ENCODE measurements at regions of chr9 and their contacts with region 1.

Region 1: GRCh38 chr9:83544002-83544698 is 5.9 kb upstream of the FRMD3 start:
- DNase-seq: no peak
- H3K4me3 ChIP-seq: no peak overlapping the region
- H3K27ac ChIP-seq: no peak overlapping the region
- H3K4me1 ChIP-seq: peaks cover under 1 to 11% (median 2%) of the 10 kb centered on the region in 6 donors
- H3K27me3 ChIP-seq: peaks cover 0 to 8% (median 0%) of the 10 kb centered on the region in 7 donors
- CTCF ChIP-seq: peak in 10 of 11 experiments; percentile 29 to 77 (median 68)
- POLR2A ChIP-seq: no peak

Region 2: DNA sequence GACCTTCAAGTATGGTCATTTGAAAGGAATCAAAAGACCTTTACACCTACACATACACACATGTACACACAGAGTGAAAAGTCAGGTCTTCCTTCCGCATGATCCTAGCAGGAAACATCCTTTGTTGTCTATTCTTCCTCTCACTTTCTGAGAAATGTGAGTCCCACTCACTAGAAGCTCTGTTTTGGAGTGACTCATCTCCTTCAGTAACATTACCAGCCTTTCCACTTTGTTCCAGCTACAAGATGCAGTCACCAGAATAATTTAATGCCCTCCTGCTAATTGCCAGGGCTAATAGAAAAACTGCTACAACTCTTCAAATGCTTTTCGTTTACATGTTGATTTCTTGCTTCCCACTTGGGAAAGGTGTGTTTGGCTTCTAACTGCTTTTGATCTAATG is 898.5 kb before region 1 on chr9:
- intact Hi-C with region 1: no loop called
- DNase-seq: no peak
- H3K4me3 ChIP-seq: no peak overlapping the region
- H3K27ac ChIP-seq: no peak overlapping the region
- H3K4me1 ChIP-seq: no peaks in the 10 kb centered on the region
- H3K27me3 ChIP-seq: no peaks in the 10 kb centered on the region
- CTCF ChIP-seq: no peak
- POLR2A ChIP-seq: no peak

Region 3: GRCh38 chr9:82961504-82962125 is 582.5 kb before region 1 on chr9:
- intact Hi-C with region 1: no loop called
- DNase-seq: peak; percentile 75
- H3K4me3 ChIP-seq: no peak overlapping the region
- H3K27ac ChIP-seq: no peak overlapping the region
- H3K4me1 ChIP-seq: no peaks in the 10 kb centered on the region
- H3K27me3 ChIP-seq: peaks cover 0 to 17% (median 0%) of the 10 kb centered on the region in 7 donors
- CTCF ChIP-seq: peak in 10 of 11 experiments; percentile 60 to 75 (median 68)
- POLR2A ChIP-seq: no peak

Region 4: DNA sequence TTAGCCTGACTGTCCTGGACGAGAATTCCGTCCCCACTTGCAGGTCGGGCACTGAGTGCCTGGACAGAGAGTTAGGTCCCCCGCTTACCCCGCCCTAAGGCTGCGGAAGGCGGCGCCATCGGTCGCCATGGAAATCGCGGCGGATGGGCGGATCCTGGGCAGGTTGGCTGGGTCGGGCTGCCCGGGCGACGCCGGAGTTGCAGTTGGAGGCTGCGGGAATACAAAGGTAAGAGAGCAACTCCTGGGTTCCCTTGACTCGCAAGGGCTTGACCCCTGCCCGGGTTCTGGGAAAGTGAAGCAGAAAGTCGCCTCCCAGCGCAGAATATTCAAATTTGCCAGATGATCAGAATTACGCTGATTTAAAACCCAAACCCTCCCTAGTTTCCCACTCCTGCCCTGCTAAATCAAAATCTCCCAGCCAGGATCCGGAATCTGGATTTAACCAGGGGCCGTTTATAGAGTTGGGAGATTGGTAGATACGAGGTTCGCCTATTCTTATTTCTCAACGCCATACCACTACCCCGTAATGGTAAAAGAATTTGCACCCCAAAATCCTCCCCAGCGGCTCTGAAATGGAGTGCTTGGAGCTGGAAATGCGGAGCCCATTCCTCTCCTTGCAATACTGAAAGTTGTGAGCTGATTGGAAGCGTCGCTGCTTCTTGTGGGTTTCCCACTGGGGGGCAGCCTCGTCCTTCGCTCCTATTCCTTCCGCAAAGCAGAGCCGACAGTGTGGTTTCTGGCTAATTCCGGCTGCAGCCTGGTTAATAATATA is 324.8 kb before region 1 on chr9:
- intact Hi-C with region 1: loop called (anchors 10 kb)
- DNase-seq: peak; percentile 88
- H3K4me3 ChIP-seq: peak overlapping the region; percentile 42 to 71 (median 54)
- H3K27ac ChIP-seq: peak overlapping the region; percentile 42 to 85 (median 73)
- H3K4me1 ChIP-seq: peaks cover 3 to 33% (median 13%) of the 10 kb centered on the region in 6 donors
- H3K27me3 ChIP-seq: peaks cover 0 to 22% (median 0%) of the 10 kb centered on the region in 7 donors
- CTCF ChIP-seq: peak in 3 of 11 experiments; percentile 49 to 76 (median 67)
- POLR2A ChIP-seq: no peak

Region 5: DNA sequence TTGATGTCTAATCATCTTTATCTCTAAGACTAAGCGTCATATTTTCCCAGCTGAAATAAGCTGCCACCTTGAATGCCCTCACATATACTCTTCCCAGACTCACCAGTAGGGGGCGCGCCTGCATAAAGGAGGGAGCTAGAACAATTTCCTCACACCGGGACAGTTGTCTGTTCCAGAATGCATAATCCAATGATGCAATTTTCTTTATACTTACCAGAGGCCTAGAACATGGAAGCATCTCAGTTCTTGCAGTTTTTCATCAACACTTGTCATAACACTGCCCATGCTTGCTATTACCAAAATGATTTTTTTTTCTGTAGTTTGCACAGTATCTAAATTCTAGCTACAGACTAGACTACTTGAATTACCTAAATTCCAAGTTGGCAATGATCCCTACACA is 209.8 kb before region 1 on chr9:
- intact Hi-C with region 1: loop called (anchors 5 kb)
- DNase-seq: peak; percentile 91
- H3K4me3 ChIP-seq: no peak overlapping the region
- H3K27ac ChIP-seq: no peak overlapping the region
- H3K4me1 ChIP-seq: peaks cover 0 to 7% (median 0%) of the 10 kb centered on the region in 6 donors
- H3K27me3 ChIP-seq: no peaks in the 10 kb centered on the region
- CTCF ChIP-seq: peak; percentile 64 to 90 (median 85)
- POLR2A ChIP-seq: no peak

Region 6: DNA sequence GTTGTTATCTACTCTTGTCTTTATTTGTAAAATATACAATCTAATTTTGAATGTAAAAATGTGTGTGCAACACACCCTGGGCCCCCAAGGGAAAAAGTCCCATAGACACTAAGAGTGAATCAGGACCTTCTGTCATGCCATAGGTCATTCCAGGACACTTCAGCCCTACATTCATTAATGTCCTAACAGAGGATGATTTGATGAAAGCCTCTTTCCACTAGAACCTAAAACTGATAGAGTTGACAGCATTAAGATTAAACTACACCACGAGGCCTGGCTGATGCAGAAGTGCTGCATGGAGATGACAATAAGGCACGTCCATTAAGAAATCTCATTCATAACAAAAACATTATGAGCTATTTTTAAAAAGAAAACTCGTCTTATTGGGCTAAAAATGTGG is 52.2 kb before region 1 on chr9:
- intact Hi-C with region 1: no loop called
- DNase-seq: no peak
- H3K4me3 ChIP-seq: no peak overlapping the region
- H3K27ac ChIP-seq: no peak overlapping the region
- H3K4me1 ChIP-seq: peaks cover 0 to 15% (median 0%) of the 10 kb centered on the region in 6 donors
- H3K27me3 ChIP-seq: no peaks in the 10 kb centered on the region
- CTCF ChIP-seq: no peak
- POLR2A ChIP-seq: no peak

Measured in spleen (tissue), 13 donors.